A673 (cell line): ENCODE measurements at regions of chr19 and their contacts with region 1.

Region 1: DNA sequence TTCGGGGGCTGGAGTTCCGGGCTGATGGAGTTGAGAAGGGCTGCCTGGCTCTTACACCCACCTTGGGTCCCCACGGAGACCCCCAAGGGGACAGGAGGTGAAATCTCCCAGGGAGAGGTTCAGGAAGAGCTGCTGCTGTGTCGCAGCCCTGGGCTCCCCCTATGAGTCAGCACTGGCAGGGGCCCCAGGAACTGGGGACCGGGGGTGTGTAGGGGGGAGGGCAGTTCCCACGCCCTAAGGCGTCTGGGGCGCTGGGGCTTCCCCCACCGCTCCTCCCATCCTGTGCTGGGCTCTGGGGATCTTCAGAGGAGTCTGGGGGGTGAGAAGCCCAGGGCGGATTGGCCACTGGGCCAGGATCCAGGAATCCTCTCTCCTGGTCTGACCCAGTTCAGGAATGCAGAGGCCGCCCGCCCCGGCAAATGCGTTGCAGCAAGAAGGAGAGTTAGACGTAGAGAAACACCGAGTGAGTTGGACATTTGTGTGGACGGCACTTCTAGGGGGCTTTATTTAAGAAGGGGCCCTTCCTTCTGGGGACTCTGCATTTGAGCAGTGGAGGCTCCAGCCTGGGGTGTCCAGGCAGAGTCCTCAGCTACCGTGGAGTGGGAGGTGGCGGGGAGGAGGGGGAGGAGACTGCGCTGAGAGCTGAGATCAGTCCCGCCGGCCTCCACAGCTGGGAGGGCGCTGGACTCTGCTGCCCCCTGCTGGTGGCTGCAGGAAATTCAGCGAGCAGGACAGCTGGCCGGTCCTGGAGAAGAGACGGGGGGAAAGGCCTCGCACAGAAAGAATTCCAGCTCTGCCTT is 15.0 kb upstream of the NANOS3 start:
- DNase-seq: peak; percentile 94
- H3K4me3 ChIP-seq: peak overlapping the region; percentile 45
- H3K27ac ChIP-seq: peak overlapping the region; percentile 92
- H3K4me1 ChIP-seq: peaks cover 18% of the 10 kb centered on the region
- H3K27me3 ChIP-seq: no peaks in the 10 kb centered on the region
- CTCF ChIP-seq: peak; percentile 93

Region 2: GRCh38 chr19:13557756-13558398 is 304.1 kb before region 1 on chr19:
- CTCF ChIA-PET with region 1: no interaction called
- POLR2A ChIA-PET with region 1: no interaction called
- intact Hi-C with region 1: no loop called
- DNase-seq: no peak
- H3K4me3 ChIP-seq: no peak overlapping the region
- H3K27ac ChIP-seq: no peak overlapping the region
- H3K4me1 ChIP-seq: no peaks in the 10 kb centered on the region
- H3K27me3 ChIP-seq: peaks cover 19% of the 10 kb centered on the region
- CTCF ChIP-seq: no peak

Region 3: GRCh38 chr19:13597640-13598039 is 264.3 kb before region 1 on chr19:
- CTCF ChIA-PET with region 1: interaction called, 17 read pairs
- POLR2A ChIA-PET with region 1: interaction called, 3 read pairs
- intact Hi-C with region 1: loop called (anchors 1 kb)
- DNase-seq: peak; percentile 82
- H3K4me3 ChIP-seq: no peak overlapping the region
- H3K27ac ChIP-seq: no peak overlapping the region
- H3K4me1 ChIP-seq: peaks cover 5% of the 10 kb centered on the region
- H3K27me3 ChIP-seq: no peaks in the 10 kb centered on the region
- CTCF ChIP-seq: peak; percentile 68

Region 4: GRCh38 chr19:13774217-13775191 is 87.4 kb before region 1 on chr19 and contains the start of gene C19orf53:
- CTCF ChIA-PET with region 1: interaction called, 11 read pairs
- POLR2A ChIA-PET with region 1: interaction called, 10 read pairs
- intact Hi-C with region 1: no loop called
- DNase-seq: peak; percentile 94
- H3K4me3 ChIP-seq: peak within 1 kb of the TSS; percentile 95
- H3K27ac ChIP-seq: peak within 1 kb of the TSS; percentile 92
- H3K4me1 ChIP-seq: peaks cover 6% of the 10 kb centered on the region
- H3K27me3 ChIP-seq: no peaks in the 10 kb centered on the region
- CTCF ChIP-seq: no peak
- total RNA-seq, gene C19orf53: 137 and 140 TPM in 2 replicates

Region 5: GRCh38 chr19:13804830-13805683 is 56.9 kb before region 1 on chr19:
- CTCF ChIA-PET with region 1: interaction called, 12 read pairs
- POLR2A ChIA-PET with region 1: no interaction called
- intact Hi-C with region 1: no loop called
- DNase-seq: peak; percentile 52
- H3K4me3 ChIP-seq: no peak overlapping the region
- H3K27ac ChIP-seq: no peak overlapping the region
- H3K4me1 ChIP-seq: no peaks in the 10 kb centered on the region
- H3K27me3 ChIP-seq: no peaks in the 10 kb centered on the region
- CTCF ChIP-seq: peak; percentile 63

Region 6: DNA sequence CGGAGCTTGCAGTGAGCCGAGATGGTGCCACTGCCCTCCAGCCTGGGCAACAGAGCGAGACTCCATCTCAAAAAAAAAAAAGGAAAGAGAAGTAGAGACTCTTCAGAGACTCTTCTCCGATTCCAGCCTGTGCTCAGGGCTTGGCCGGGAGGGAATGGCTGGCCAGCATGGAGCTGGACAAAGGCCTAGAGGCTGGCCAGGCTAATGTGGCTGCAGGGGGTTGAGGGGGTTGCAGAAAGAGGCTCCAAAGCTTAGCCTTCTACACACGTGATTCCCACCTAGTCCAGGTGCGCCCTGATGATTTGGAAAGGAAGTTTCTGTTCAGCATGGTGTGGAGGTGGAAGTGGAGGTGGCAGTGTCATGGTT is 32.2 kb before region 1 on chr19:
- CTCF ChIA-PET with region 1: no interaction called
- POLR2A ChIA-PET with region 1: no interaction called
- intact Hi-C with region 1: no loop called
- DNase-seq: no peak
- H3K4me3 ChIP-seq: no peak overlapping the region
- H3K27ac ChIP-seq: no peak overlapping the region
- H3K4me1 ChIP-seq: peaks cover 12% of the 10 kb centered on the region
- H3K27me3 ChIP-seq: no peaks in the 10 kb centered on the region
- CTCF ChIP-seq: no peak

Region 7: DNA sequence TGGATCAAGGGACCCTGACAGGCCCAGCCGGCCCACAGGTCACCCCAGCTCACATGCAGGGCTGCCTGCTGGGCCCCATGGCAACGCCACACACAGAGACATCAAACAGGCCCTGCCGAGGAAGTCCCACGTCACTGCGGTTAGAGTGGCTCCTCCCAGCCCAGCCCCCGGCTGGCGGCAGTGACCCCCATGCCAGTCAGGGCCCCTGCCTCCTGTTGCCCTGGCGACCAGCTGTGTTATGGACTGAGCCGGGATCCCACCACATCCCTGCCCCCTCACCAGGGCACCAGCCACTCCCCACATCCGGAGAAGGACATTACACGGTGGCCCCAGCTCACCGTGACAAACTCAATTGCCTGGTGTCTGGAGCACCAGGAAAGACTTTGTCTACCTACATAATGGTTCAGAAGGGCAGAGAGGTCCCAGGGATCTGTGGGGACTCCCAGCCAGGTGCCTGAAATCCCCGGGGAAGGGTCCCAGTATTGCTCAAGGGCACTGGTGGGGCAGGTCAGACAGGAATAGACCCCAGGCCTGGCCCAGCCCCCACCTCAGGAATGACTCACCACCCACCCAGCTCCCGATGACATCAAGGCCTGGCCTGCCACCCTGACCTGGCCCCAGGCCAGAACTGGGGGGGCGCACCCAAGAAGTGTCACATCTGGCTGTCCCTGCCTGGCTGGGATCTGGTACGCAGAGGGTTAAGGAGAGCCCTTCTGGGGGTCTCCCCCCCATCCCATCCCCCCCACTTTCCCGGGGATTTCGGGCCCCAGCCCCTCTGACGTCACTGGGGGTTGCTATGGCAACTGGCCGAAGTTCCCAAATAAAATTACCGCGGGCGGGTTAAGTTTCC is 15.2 kb before region 1 on chr19:
- CTCF ChIA-PET with region 1: interaction called, 14 read pairs
- POLR2A ChIA-PET with region 1: no interaction called
- intact Hi-C with region 1: no loop called
- DNase-seq: peak; percentile 94
- H3K4me3 ChIP-seq: peak overlapping the region; percentile 59
- H3K27ac ChIP-seq: peak overlapping the region; percentile 100
- H3K4me1 ChIP-seq: peaks cover 51% of the 10 kb centered on the region
- H3K27me3 ChIP-seq: no peaks in the 10 kb centered on the region
- CTCF ChIP-seq: no peak